Right cardiac atrium (tissue), 5 donors: ENCODE measurements at regions of chr5 and their contacts with region 1.

Region 1: DNA sequence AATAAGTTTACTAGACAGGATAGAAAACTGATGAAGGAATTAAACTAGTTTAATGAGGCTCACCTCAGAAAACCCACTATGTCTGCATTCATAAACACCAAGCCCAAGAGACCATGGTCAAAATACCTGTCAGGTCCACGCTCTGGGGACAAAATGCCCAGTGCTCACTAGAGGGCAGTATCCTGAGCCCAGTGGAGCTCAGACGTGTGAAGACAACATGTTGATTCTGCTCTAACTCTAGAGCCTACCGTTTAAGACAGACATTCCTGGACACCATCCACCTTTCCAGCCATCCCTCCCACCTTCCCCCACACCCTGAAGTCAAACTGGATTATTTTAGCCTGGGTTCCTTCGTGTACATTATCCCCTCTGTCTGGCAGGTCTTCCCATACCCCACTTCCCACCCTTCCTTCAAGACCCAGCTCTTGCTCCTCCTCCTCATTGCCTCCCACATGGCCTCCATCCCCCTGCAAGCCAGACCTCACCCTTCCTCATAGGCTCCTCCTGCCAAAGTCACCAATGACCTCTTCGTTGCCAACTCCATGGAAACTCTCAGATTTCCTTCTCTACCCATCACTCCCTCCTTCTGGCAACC is 142.3 kb upstream of the FSTL4 start:
- DNase-seq: peak in 1 of 3 donors; percentile 33
- ATAC-seq: peak in 1 of 2 donors; percentile 53
- H3K4me3 ChIP-seq: no peak overlapping the region
- H3K27ac ChIP-seq: no peak overlapping the region
- H3K4me1 ChIP-seq: no peaks in the 10 kb centered on the region
- H3K27me3 ChIP-seq: no peaks in the 10 kb centered on the region

Region 2: GRCh38 chr5:133618141-133618540 is 136.5 kb before region 1 on chr5:
- intact Hi-C with region 1: no loop called
- DNase-seq: no peak
- ATAC-seq: no peak
- H3K4me3 ChIP-seq: no peak overlapping the region
- H3K27ac ChIP-seq: no peak overlapping the region
- H3K4me1 ChIP-seq: no peaks in the 10 kb centered on the region
- H3K27me3 ChIP-seq: no peaks in the 10 kb centered on the region

Region 3: GRCh38 chr5:133868946-133869518 is 114.4 kb after region 1 on chr5:
- intact Hi-C with region 1: loop called in 2 of 4 experiments (anchors 1 to 10 kb)
- DNase-seq: peak; percentile 80 to 92 (median 86)
- ATAC-seq: peak; percentile 71 to 81
- H3K4me3 ChIP-seq: peak overlapping the region; percentile 21
- H3K27ac ChIP-seq: no peak overlapping the region
- H3K4me1 ChIP-seq: no peaks in the 10 kb centered on the region
- H3K27me3 ChIP-seq: no peaks in the 10 kb centered on the region